ENCODE measurements at regions of chr15 and their contacts with region 1.

Region 1: GRCh38 chr15:22224241-22224671 is 143.9 kb downstream of the OR4M2 start:
- DNase-seq: no peak
- ATAC-seq: no peak
- H3K4me3 Mint-ChIP-seq: no peak overlapping the region
- H3K27ac Mint-ChIP-seq: no peak overlapping the region
- H3K4me1 Mint-ChIP-seq: peaks cover 20% of the 10 kb centered on the region
- H3K27me3 Mint-ChIP-seq: peaks cover 4% of the 10 kb centered on the region
- CTCF ChIP-seq: no peak

Region 2: GRCh38 chr15:20356444-20356910 is 1867.8 kb before region 1 on chr15:
- CTCF ChIA-PET with region 1: interaction called, 74 read pairs
- POLR2A ChIA-PET with region 1: no interaction called
- intact Hi-C with region 1: no loop called
- DNase-seq: peak; percentile 83
- ATAC-seq: peak; percentile 59
- H3K4me3 Mint-ChIP-seq: no peak overlapping the region
- H3K27ac Mint-ChIP-seq: no peak overlapping the region
- H3K4me1 Mint-ChIP-seq: peaks cover 7% of the 10 kb centered on the region
- H3K27me3 Mint-ChIP-seq: no peaks in the 10 kb centered on the region
- CTCF ChIP-seq: peak; percentile 94

Region 3: GRCh38 chr15:22243440-22244130 is 19.3 kb after region 1 on chr15:
- CTCF ChIA-PET with region 1: no interaction called
- POLR2A ChIA-PET with region 1: no interaction called
- intact Hi-C with region 1: no loop called
- DNase-seq: no peak
- ATAC-seq: no peak
- H3K4me3 Mint-ChIP-seq: no peak overlapping the region
- H3K27ac Mint-ChIP-seq: no peak overlapping the region
- H3K4me1 Mint-ChIP-seq: peaks cover 4% of the 10 kb centered on the region
- H3K27me3 Mint-ChIP-seq: peaks cover 12% of the 10 kb centered on the region
- CTCF ChIP-seq: no peak

Measured in activated CD8-positive, alpha-beta T cell treated with anti-CD3 and anti-CD28 coated beads for 36 hours (primary cell).